ENCODE measurements at regions of chr7 and their contacts with region 1.

Region 1: DNA sequence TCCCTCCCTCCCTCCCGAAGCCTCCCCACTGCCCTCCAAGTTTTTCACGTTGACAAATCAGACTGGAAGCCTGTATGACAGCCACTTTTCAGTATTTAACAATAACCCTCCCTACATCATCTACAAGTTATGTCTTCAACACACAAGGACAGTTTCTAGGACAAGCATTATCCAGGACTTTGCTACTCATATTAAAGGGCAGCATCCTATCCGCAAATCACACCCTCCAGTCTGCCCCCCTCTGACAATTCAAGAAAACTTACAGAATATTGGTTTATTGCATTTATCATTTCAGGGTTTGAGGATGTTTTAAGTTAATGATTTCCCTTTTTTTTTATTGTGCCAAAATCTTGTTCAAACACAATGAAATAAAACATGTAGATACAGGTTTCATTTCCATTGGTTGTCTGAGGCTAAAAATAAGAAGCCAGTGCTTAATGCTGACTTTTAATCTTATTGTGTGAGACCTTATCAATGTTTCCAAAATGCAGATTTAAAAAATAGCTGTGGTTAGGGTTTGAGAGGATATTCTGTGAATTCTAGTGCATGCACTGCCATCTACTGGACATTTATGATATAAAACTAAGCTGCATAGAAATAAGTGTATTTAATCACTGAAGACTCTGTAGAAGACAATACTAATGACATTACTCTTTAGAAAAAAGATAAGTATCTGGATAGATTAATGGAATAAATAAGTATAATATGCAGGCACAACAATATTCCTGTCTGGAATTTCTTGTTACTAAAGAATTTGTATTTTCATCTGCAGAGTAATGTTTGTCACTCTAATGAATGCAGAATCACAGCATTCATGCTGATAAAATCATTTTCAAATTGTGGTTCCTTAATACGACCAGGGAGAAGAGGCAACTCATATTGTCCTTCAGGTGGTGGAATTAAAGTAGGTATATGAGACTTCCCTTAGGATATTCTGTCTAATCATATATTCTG is 64.1 kb downstream of the CAV1 start:
- DNase-seq: peak in 3 of 14 experiments; percentile 46 to 61 (median 57)
- ATAC-seq: no peak
- H3K4me3 ChIP-seq: no peak overlapping the region
- H3K4me3 Mint-ChIP-seq: no peak overlapping the region
- H3K27ac ChIP-seq: no peak overlapping the region
- H3K27ac Mint-ChIP-seq: no peak overlapping the region
- H3K4me1 ChIP-seq: peaks cover 6% of the 10 kb centered on the region
- H3K4me1 Mint-ChIP-seq: peaks cover 22% of the 10 kb centered on the region
- H3K27me3 ChIP-seq: peaks cover 0 to 26% of the 10 kb centered on the region in 2 experiments
- H3K27me3 Mint-ChIP-seq: peaks cover 25% of the 10 kb centered on the region
- CTCF ChIP-seq: peak; percentile 95

Region 2: DNA sequence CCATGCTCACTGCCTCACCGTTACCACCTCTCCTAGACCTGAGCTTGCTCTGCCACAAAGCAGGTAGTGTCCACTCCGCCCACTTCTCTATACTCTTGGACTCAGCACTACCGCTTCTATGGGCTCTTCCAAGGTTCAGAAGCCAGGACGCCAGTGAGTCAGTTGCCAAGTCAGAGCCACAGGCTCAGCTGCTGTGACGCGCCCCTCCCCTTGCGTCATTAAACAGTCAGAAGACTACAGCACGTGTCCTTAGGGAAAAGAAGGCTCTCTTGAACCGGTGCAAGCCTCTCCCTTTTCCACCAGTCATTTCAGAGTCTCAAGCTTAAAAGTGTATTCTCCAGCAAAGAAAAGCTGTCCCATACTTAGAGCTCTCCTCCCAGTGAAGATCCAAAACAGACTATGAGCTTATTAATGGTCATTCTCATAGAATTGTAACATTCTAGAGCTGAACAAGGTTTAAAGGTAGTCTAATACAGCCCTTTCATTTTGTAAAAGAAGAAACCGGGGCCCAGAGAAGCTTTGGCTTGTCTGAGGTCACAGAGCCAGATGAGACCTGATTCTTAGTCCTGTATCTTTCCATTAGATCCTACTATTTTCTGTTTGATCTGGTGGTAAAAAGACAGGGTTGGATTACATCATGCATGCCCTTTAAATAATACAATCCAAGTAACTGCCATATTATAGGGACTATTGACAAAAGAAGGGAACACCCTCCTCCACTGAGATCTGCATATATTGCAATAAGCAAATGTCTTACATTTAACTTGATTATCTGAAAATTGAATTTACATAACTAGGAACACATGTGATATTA is 42.2 kb after region 1 on chr7:
- CTCF ChIA-PET with region 1: no interaction called
- POLR2A ChIA-PET with region 1: no interaction called
- intact Hi-C with region 1: no loop called
- DNase-seq: peak in 2 of 14 experiments; percentile 40 to 59
- ATAC-seq: no peak
- H3K4me3 ChIP-seq: no peak overlapping the region
- H3K4me3 Mint-ChIP-seq: no peak overlapping the region
- H3K27ac ChIP-seq: no peak overlapping the region
- H3K27ac Mint-ChIP-seq: no peak overlapping the region
- H3K4me1 ChIP-seq: no peaks in the 10 kb centered on the region
- H3K4me1 Mint-ChIP-seq: no peaks in the 10 kb centered on the region
- H3K27me3 ChIP-seq: no peaks in the 10 kb centered on the region
- H3K27me3 Mint-ChIP-seq: peaks cover 15% of the 10 kb centered on the region
- CTCF ChIP-seq: no peak

Region 3: GRCh38 chr7:116809636-116810266 is 220.8 kb after region 1 on chr7:
- CTCF ChIA-PET with region 1: no interaction called
- POLR2A ChIA-PET with region 1: interaction called, 3 read pairs
- intact Hi-C with region 1: loop called (anchors 1 to 5 kb)
- DNase-seq: peak in 4 of 14 experiments; percentile 7 to 62 (median 54)
- ATAC-seq: peak; percentile 48
- H3K4me3 ChIP-seq: no peak overlapping the region
- H3K4me3 Mint-ChIP-seq: no peak overlapping the region
- H3K27ac ChIP-seq: no peak overlapping the region
- H3K27ac Mint-ChIP-seq: no peak overlapping the region
- H3K4me1 ChIP-seq: no peaks in the 10 kb centered on the region
- H3K4me1 Mint-ChIP-seq: no peaks in the 10 kb centered on the region
- H3K27me3 ChIP-seq: no peaks in the 10 kb centered on the region
- H3K27me3 Mint-ChIP-seq: no peaks in the 10 kb centered on the region
- CTCF ChIP-seq: peak; percentile 69

Measured in CD4-positive, alpha-beta T cell (primary cell).